ENCODE measurements at regions of chr11 and their contacts with region 1.

Region 1: GRCh38 chr11:15074206-15075161 is 1.1 kb downstream of the CALCB start:
- DNase-seq: peak; percentile 51
- ATAC-seq: peak; percentile 89
- H3K4me3 ChIP-seq: no peak overlapping the region; the same call in 1 of the 2 replicates
- H3K27ac ChIP-seq: no peak overlapping the region
- H3K4me1 ChIP-seq: peaks cover 4% of the 10 kb centered on the region; the same call in 1 of the 2 replicates
- H3K27me3 ChIP-seq: peaks cover 47% of the 10 kb centered on the region
- CTCF ChIP-seq: peak; percentile 64
- POLR2A ChIP-seq: no peak
- RAD21 ChIP-seq: peak; percentile 64

Region 2: DNA sequence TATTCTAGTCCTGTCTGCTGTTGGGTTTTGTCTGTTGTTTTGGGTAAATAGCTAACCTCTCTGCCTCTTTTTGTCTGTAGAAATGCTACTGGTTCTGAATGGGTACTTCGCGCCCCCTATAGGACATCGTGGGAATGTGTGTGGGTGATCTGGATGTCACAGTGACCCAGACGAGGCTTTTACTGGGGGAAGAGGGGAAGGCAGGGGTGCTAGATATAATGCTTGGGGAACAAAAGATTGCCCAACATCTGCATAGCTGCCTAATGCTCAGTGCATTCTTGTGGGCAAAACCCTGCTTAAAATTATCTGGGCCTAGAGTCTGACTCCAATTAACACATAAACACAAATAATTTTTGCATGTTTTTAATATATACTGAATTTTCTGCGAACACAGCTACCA is 1739.2 kb before region 1 on chr11:
- CTCF ChIA-PET with region 1: no interaction called
- POLR2A ChIA-PET with region 1: no interaction called
- dilution Hi-C with region 1: no loop called
- in situ Hi-C with region 1: no loop called
- intact Hi-C with region 1: no loop called
- DNase-seq: peak; percentile 66
- ATAC-seq: peak; percentile 23
- H3K4me3 ChIP-seq: no peak overlapping the region
- H3K27ac ChIP-seq: no peak overlapping the region
- H3K4me1 ChIP-seq: peaks cover 29% of the 10 kb centered on the region
- H3K27me3 ChIP-seq: no peaks in the 10 kb centered on the region
- CTCF ChIP-seq: peak; percentile 78
- POLR2A ChIP-seq: no peak
- RAD21 ChIP-seq: peak; percentile 72

Region 3: GRCh38 chr11:14537134-14537599 is 537.3 kb before region 1 on chr11:
- CTCF ChIA-PET with region 1: no interaction called
- POLR2A ChIA-PET with region 1: no interaction called
- dilution Hi-C with region 1: no loop called
- in situ Hi-C with region 1: no loop called
- intact Hi-C with region 1: loop called (anchors 1 kb)
- DNase-seq: peak; percentile 15
- ATAC-seq: peak; percentile 86
- H3K4me3 ChIP-seq: no peak overlapping the region
- H3K27ac ChIP-seq: no peak overlapping the region
- H3K4me1 ChIP-seq: no peaks in the 10 kb centered on the region
- H3K27me3 ChIP-seq: peaks cover 5% of the 10 kb centered on the region
- CTCF ChIP-seq: peak; percentile 67
- POLR2A ChIP-seq: no peak
- RAD21 ChIP-seq: peak; percentile 56

Region 4: DNA sequence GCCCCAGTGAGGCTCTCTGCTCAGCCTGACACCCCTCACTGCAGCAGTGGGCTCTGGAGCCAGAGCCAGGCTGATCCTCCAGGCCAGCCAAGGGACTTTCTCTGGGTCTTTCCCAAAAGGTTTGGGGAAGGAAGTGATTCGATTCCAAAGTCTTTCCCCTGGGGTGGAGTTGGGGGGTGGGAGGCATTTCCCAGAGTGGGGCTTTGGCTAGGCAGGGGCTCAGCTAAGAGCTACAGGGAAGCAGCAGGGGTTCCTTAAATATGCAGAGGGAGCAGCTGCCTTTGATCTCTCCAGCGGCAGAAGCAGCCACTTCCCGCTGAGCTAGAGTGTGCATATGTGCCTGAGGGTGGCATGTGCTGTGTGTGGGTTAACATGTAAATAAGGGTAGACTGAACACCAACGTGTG is 233.1 kb after region 1 on chr11:
- CTCF ChIA-PET with region 1: no interaction called
- POLR2A ChIA-PET with region 1: no interaction called
- dilution Hi-C with region 1: no loop called
- in situ Hi-C with region 1: no loop called
- intact Hi-C with region 1: no loop called
- DNase-seq: no peak
- ATAC-seq: no peak
- H3K4me3 ChIP-seq: no peak overlapping the region
- H3K27ac ChIP-seq: no peak overlapping the region
- H3K4me1 ChIP-seq: no peaks in the 10 kb centered on the region
- H3K27me3 ChIP-seq: peaks cover 2% of the 10 kb centered on the region
- CTCF ChIP-seq: no peak
- POLR2A ChIP-seq: no peak
- RAD21 ChIP-seq: no peak

Measured in IMR-90 (cell line).